Tibial artery (tissue), 4 donors: ENCODE measurements at regions of chr17 and their contacts with region 1.

Region 1: GRCh38 chr17:2054512-2055291 is at the start of gene HIC1:
- DNase-seq: peak; percentile 74 to 87
- H3K4me3 ChIP-seq: peak within 1 kb of the TSS; percentile 51 to 60
- H3K27ac ChIP-seq: peak within 1 kb of the TSS; percentile 65 to 69
- H3K4me1 ChIP-seq: peaks cover 0 to 52% (median 41%) of the 10 kb centered on the region in 4 donors
- H3K27me3 ChIP-seq: peaks cover 0 to 51% of the 10 kb centered on the region in 2 donors
- CTCF ChIP-seq: peak; percentile 97 to 98

Region 2: DNA sequence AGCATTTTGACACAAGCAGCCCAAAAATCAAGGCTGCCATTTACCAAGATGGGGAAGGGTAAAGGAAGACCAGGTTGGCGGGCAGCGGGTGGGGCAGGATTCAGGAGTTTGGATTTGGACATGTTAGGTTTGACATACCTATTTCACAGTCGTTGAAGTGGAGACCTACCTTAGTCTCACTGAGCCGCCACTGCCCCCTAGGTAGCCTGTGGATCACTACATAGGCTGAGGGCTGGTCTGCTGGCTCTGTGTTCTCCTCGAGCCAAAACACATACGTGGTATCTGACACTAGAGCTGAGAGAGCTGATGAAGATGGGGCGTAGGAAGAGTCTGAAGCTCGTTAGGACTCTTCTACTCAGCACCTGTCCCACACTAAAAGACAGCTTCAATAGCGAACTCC is 115.3 kb after region 1 on chr17:
- intact Hi-C with region 1: no loop called
- DNase-seq: no peak
- H3K4me3 ChIP-seq: no peak overlapping the region
- H3K27ac ChIP-seq: no peak overlapping the region
- H3K4me1 ChIP-seq: peaks cover under 1 to 37% (median 33%) of the 10 kb centered on the region in 4 donors
- H3K27me3 ChIP-seq: no peaks in the 10 kb centered on the region
- CTCF ChIP-seq: no peak

Region 3: DNA sequence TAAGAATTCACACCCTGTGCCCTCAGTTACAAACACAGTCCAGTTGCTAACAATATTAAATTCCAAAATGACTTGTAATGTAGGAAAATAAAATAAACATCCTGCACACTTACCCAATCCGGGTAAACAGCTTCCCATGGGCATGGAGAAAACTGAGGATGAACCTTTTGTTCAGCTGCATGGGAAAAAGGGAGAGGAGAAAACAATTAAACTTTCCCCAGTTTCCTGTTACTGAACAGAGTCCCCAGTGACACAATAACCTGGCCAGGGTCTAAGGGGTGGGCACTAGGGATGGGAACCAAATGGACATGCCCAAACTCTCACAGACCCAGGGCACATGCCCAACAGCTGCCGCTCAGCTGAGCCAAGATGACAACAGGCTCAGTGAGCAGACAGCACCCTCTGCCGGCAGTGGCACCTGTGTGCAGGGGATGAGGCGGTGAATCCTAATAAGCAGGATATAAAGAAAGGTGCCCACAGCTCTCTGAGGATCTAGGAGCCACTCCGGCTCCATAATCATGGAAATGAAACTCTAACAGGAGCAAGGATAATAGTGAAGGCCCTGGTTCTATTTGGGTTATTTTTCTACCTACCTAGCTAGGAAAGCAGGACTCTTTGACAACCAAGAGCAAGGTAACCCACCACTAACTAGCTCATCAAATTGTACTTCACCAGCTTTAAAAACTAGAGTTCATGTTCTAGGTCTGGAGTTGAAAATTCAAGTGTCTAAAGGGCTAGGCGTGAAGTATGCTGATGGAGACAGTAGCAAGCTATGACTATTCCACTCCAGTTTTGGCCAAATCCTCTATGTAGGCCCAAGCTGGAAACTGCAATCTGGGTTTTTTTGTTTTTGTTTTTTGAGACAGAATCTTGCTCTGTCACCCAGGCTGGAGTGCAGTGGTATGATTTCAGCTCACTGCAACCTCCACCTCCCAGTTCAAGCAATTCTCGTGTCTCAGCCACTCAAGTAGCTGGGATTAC is 190.1 kb after region 1 on chr17:
- intact Hi-C with region 1: loop called (anchors 2 kb)
- DNase-seq: peak; percentile 91 to 92
- H3K4me3 ChIP-seq: no peak overlapping the region
- H3K27ac ChIP-seq: peak overlapping the region; percentile 47 to 54
- H3K4me1 ChIP-seq: peaks cover 0 to 26% (median 17%) of the 10 kb centered on the region in 4 donors
- H3K27me3 ChIP-seq: no peaks in the 10 kb centered on the region
- CTCF ChIP-seq: peak; percentile 97